GM10248 (cell line): ENCODE measurements at regions of chr6 and their contacts with region 1.

Region 1: DNA sequence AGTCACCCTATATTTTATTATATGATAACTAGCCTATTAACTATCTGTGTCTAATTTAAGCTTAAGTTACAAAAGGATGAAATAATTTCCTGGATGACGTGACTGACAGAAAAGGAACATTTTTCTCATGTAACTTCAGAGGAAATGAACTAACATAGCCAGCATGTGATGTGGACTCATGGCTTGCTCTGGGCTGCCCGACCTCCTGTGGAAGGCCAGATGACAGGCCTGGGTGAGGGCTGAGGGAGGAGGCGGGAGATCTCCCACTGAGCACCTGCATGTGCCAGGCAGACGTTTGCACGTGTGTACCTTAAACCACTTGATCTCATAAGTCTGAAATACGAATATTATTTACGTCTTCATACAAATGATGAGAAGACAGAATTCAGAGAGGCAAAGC is 321.1 kb downstream of the SYNE1 start:
- DNase-seq: no peak
- CTCF ChIP-seq: no peak

Region 2: DNA sequence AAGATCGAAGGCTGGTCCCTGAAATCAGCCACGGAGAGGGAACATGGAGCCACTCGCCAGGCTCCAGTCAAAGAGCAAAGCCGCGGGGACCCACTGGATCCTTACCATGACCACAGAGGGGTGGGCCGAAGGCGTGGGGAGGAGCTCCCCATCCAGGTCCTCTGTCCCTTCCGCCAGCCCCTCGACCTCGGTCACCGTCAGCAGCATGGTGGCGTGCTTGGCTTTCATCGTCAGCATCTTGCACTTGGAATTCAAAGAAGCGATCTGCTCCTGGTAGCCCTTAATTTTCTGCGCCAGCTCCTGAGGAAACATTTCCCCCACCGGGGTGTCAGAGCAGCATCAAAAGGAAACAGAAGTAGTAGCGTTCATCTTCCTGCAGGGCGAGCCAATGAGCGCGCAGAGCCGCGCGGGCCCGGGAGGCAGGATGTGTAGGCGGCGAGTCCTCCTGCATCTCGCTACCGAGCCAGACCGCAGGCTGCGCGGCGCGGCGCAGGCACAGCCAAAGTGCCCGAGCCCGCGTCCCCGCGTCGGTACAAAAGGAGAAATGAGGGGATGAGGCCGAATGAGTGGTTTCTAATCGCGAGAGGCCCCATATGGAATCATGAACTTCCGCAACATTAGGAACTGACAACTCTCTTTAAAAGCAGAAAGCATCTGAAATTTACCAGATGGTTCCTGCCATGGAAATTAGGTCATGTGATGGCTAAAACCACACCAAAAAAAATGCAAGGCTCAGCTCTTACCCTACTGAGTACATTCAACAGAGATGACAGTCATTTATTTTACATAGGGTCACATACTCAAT is 14.1 kb before region 1 on chr6:
- CTCF ChIA-PET with region 1: interaction called, 23 read pairs
- POLR2A ChIA-PET with region 1: no interaction called
- DNase-seq: peak; percentile 88
- CTCF ChIP-seq: peak; percentile 49